CD8-positive, alpha-beta T cell (primary cell): ENCODE measurements at regions of chr12 and their contacts with region 1.

Region 1: GRCh38 chr12:50504798-50505385 is at the start of gene DIP2B:
- DNase-seq: peak; percentile 92 to 97 (median 95)
- ATAC-seq: peak; percentile 92
- H3K4me3 ChIP-seq: peak within 1 kb of the TSS; percentile 88 to 91
- H3K4me3 Mint-ChIP-seq: peak within 1 kb of the TSS; percentile 94
- H3K27ac ChIP-seq: peak within 1 kb of the TSS; percentile 63 to 73
- H3K27ac Mint-ChIP-seq: peak within 1 kb of the TSS; percentile 92
- H3K4me1 ChIP-seq: peaks cover 42% of the 10 kb centered on the region
- H3K4me1 Mint-ChIP-seq: peaks cover 50% of the 10 kb centered on the region
- H3K27me3 ChIP-seq: no peaks in the 10 kb centered on the region
- H3K27me3 Mint-ChIP-seq: no peaks in the 10 kb centered on the region
- CTCF ChIP-seq: peak; percentile 86
- total RNA-seq, gene DIP2B: 18.8 to 20.7 TPM

Region 2: GRCh38 chr12:50246873-50247612 is 257.8 kb before region 1 on chr12:
- CTCF ChIA-PET with region 1: no interaction called
- POLR2A ChIA-PET with region 1: no interaction called
- intact Hi-C with region 1: no loop called
- DNase-seq: peak in 1 of 9 experiments; percentile 11
- ATAC-seq: no peak
- H3K4me3 ChIP-seq: no peak overlapping the region
- H3K4me3 Mint-ChIP-seq: no peak overlapping the region
- H3K27ac ChIP-seq: no peak overlapping the region
- H3K27ac Mint-ChIP-seq: no peak overlapping the region
- H3K4me1 ChIP-seq: no peaks in the 10 kb centered on the region
- H3K4me1 Mint-ChIP-seq: no peaks in the 10 kb centered on the region
- H3K27me3 ChIP-seq: no peaks in the 10 kb centered on the region
- H3K27me3 Mint-ChIP-seq: no peaks in the 10 kb centered on the region
- CTCF ChIP-seq: no peak

Region 3: GRCh38 chr12:50517456-50518048 is 12.7 kb after region 1 on chr12:
- CTCF ChIA-PET with region 1: interaction called, 21 read pairs
- POLR2A ChIA-PET with region 1: interaction called, 17 read pairs
- intact Hi-C with region 1: loop called in 1 of 2 experiments (anchors 1 kb)
- DNase-seq: peak in 1 of 9 experiments; percentile 47
- ATAC-seq: peak; percentile 77
- H3K4me3 ChIP-seq: no peak overlapping the region
- H3K4me3 Mint-ChIP-seq: no peak overlapping the region
- H3K27ac ChIP-seq: peak overlapping the region; percentile 7 to 23
- H3K27ac Mint-ChIP-seq: no peak overlapping the region
- H3K4me1 ChIP-seq: peaks cover 84% of the 10 kb centered on the region
- H3K4me1 Mint-ChIP-seq: peaks cover 70% of the 10 kb centered on the region
- H3K27me3 ChIP-seq: no peaks in the 10 kb centered on the region
- H3K27me3 Mint-ChIP-seq: no peaks in the 10 kb centered on the region
- CTCF ChIP-seq: no peak

Region 4: GRCh38 chr12:50545786-50546185 is 40.9 kb after region 1 on chr12:
- CTCF ChIA-PET with region 1: interaction called, 7 read pairs
- POLR2A ChIA-PET with region 1: no interaction called
- intact Hi-C with region 1: loop called in 1 of 2 experiments (anchors 5 kb)
- DNase-seq: no peak
- ATAC-seq: no peak
- H3K4me3 ChIP-seq: no peak overlapping the region
- H3K4me3 Mint-ChIP-seq: no peak overlapping the region
- H3K27ac ChIP-seq: no peak overlapping the region
- H3K27ac Mint-ChIP-seq: no peak overlapping the region
- H3K4me1 ChIP-seq: no peaks in the 10 kb centered on the region
- H3K4me1 Mint-ChIP-seq: peaks cover 33% of the 10 kb centered on the region
- H3K27me3 ChIP-seq: no peaks in the 10 kb centered on the region
- H3K27me3 Mint-ChIP-seq: no peaks in the 10 kb centered on the region
- CTCF ChIP-seq: no peak

Region 5: DNA sequence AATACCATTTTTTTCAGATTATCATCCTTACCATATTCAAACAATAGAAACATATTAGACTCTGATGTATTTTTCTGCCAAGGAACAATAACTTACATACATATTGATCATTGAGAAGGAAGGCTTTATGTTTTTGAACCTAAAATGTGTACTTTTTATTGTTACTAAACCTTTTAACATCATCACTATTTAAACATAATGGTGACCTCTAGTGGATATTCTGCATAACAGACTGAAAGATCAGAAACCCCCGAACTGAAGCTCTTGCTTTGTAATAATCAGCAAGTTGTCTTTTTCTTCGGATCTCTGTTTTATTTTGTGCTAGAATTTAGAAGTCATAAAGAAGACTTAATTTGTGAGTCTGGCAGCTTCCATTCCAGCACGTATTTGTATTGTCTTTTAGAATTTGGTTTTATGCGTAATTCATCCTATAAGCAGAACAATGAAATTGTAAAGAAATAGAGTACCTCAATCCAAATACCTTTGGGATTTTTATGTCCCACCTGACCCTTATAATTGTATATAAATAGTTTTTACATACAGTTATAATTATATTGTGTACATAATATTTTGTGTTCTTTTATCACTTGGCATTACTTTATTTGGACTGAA is 133.1 kb after region 1 on chr12:
- CTCF ChIA-PET with region 1: interaction called, 150 read pairs
- POLR2A ChIA-PET with region 1: interaction called, 13 read pairs
- intact Hi-C with region 1: loop called (anchors 1 kb)
- DNase-seq: peak in 2 of 9 experiments; percentile 46 to 65
- ATAC-seq: peak; percentile 62
- H3K4me3 ChIP-seq: no peak overlapping the region
- H3K4me3 Mint-ChIP-seq: no peak overlapping the region
- H3K27ac ChIP-seq: no peak overlapping the region
- H3K27ac Mint-ChIP-seq: peak overlapping the region; percentile 82
- H3K4me1 ChIP-seq: peaks cover 5% of the 10 kb centered on the region
- H3K4me1 Mint-ChIP-seq: peaks cover 26% of the 10 kb centered on the region
- H3K27me3 ChIP-seq: no peaks in the 10 kb centered on the region
- H3K27me3 Mint-ChIP-seq: no peaks in the 10 kb centered on the region
- CTCF ChIP-seq: peak; percentile 80

Region 6: GRCh38 chr12:50986966-50987737 is 482.3 kb after region 1 on chr12:
- CTCF ChIA-PET with region 1: no interaction called
- POLR2A ChIA-PET with region 1: no interaction called
- intact Hi-C with region 1: loop called in 1 of 2 experiments (anchors 1 kb)
- DNase-seq: peak in 7 of 9 experiments; percentile 18 to 62 (median 31)
- ATAC-seq: peak; percentile 58
- H3K4me3 ChIP-seq: no peak overlapping the region
- H3K4me3 Mint-ChIP-seq: no peak overlapping the region
- H3K27ac ChIP-seq: no peak overlapping the region
- H3K27ac Mint-ChIP-seq: peak overlapping the region; percentile 23
- H3K4me1 ChIP-seq: no peaks in the 10 kb centered on the region
- H3K4me1 Mint-ChIP-seq: peaks cover 6% of the 10 kb centered on the region
- H3K27me3 ChIP-seq: no peaks in the 10 kb centered on the region
- H3K27me3 Mint-ChIP-seq: no peaks in the 10 kb centered on the region
- CTCF ChIP-seq: no peak

Region 7: DNA sequence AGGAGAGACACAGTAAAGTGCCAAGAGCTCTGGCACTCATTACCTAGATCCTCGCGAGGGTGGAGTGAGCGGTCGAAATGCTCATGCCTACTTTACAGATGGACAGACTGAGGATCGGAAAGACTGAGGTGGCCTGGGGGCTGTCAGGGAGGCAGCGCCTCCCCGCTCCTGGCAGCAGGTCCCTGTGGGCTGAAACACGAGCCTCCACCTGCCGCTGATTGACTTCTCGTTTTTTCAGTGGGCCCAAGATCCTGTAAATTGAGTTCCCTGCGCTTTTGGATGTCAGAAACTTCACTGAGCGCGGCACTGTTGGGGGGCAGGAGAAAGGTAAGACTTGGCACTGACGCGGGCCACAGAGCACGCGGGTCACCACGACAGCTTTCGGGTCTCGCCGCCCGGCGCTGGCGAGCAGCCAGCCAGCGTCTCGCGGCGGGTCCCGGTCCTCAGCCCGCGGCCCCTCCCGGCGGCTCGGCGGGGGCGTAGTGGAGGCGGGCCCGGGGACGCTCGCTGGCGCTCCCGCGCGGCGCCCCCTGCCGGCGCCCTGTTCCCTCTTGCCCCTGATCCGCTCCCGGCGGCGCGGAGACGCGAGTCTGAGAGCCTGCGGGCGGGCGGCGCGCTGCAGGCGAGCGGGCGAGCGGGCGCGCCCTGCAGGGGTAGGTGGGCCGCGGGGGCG is 1085.6 kb after region 1 on chr12:
- CTCF ChIA-PET with region 1: no interaction called
- POLR2A ChIA-PET with region 1: no interaction called
- intact Hi-C with region 1: no loop called
- DNase-seq: peak; percentile 55 to 87 (median 72)
- ATAC-seq: peak; percentile 84
- H3K4me3 ChIP-seq: peak overlapping the region; percentile 46 to 50
- H3K4me3 Mint-ChIP-seq: peak overlapping the region; percentile 88
- H3K27ac ChIP-seq: no peak overlapping the region
- H3K27ac Mint-ChIP-seq: peak overlapping the region; percentile 64
- H3K4me1 ChIP-seq: peaks cover 12% of the 10 kb centered on the region
- H3K4me1 Mint-ChIP-seq: peaks cover 20% of the 10 kb centered on the region
- H3K27me3 ChIP-seq: peaks cover 0 to 12% of the 10 kb centered on the region in 2 experiments
- H3K27me3 Mint-ChIP-seq: peaks cover 37% of the 10 kb centered on the region
- CTCF ChIP-seq: peak; percentile 56